Activated B cell treated with CpG ODN at 0.5 μM for 24 hours (primary cell): ENCODE measurements at regions of chr12 and their contacts with region 1.

Region 1: GRCh38 chr12:76031537-76032073 is at the start of gene PHLDA1:
- DNase-seq: peak; percentile 84
- ATAC-seq: peak; percentile 85
- H3K4me3 Mint-ChIP-seq: peak within 1 kb of the TSS; percentile 89
- H3K27ac Mint-ChIP-seq: peak within 1 kb of the TSS; percentile 84
- H3K4me1 Mint-ChIP-seq: peaks cover 22% of the 10 kb centered on the region
- H3K27me3 Mint-ChIP-seq: peaks cover 17% of the 10 kb centered on the region
- CTCF ChIP-seq: no peak
- total RNA-seq, gene PHLDA1: 0.83 and 1.1 TPM in 2 replicates

Region 2: DNA sequence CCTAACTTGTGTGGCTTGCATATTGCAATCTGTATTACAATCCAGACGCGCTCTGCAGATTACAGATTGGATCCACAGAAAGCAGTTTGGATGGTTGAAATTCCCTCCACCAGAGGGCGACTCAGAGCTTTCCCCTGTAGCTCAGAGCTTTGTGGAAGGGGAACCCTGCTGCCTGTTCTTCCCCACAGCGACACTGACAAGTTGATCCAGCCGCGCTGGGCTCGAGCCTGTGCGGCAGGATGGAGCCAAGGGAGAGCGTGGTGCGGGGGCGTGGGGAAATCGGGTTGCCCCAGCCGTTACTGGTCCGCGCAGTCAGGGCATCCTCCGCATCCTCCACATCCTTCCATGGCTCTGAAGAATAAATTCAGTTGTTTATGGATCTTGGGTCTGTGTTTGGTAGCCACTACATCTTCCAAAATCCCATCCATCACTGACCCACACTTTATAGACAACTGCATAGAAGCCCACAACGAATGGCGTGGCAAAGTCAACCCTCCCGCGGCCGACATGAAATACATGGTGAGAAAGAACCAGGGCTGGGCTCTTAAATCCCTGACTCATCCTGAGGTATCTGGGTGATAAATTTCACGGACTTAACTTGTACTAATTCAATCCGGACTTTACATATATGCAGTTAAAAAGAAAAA is 697.1 kb before region 1 on chr12 and contains the start of gene GLIPR1L1:
- CTCF ChIA-PET with region 1: interaction called, 7 read pairs
- POLR2A ChIA-PET with region 1: interaction called, 4 read pairs
- intact Hi-C with region 1: loop called (anchors 1 kb)
- DNase-seq: peak; percentile 46
- ATAC-seq: peak; percentile 75
- H3K4me3 Mint-ChIP-seq: peak within 1 kb of the TSS; percentile 60
- H3K27ac Mint-ChIP-seq: no peak within 1 kb of the TSS
- H3K4me1 Mint-ChIP-seq: peaks cover 16% of the 10 kb centered on the region
- H3K27me3 Mint-ChIP-seq: peaks cover 23% of the 10 kb centered on the region
- CTCF ChIP-seq: peak; percentile 87
- total RNA-seq, gene GLIPR1L1: not detected in 2 replicates

Region 3: DNA sequence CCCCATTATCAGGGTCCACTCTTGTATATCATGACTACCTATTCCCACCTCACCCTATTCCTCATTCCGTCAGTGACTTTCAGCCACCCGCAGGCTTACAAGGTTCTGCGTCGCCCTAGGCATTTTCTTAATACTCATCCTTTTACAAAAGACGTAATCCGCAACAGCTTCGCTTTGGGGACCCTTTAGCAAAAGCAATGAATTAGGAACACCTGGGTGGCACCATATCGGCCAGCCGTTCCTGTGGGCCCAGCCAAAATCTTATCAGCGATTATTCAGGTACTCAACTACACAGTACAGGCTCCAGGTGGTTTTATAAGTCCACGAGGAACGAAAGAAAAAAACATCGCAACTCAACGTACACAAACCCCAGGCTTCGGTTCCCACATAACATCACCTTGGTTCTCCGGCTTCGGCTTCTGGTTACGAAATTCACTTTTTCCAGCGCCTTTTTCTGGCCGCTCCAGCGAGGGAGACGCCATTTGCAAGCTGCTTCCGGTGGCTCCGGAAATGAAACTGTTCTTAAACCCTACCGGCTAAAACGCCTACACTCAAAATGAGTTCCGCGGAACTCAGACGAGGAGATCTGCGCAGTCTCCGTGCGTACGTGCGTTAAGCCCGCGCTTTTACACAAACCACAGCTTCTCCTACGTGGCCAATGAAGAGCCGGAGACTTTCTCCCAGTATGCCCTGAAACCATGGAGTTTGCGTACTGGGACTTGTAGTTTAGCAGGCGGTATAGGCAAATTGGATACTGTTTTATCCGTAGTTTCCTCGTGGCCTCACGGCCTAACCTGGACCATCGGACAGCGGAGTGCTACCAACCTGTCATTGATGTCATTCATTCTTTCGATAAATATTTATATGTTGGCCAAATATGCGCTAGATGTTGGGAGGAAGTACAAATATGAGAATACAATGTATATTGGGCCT is 520.2 kb before region 1 on chr12 and contains the start of gene KRR1:
- CTCF ChIA-PET with region 1: interaction called, 10 read pairs
- POLR2A ChIA-PET with region 1: interaction called, 23 read pairs
- intact Hi-C with region 1: loop called (anchors 1 kb)
- DNase-seq: peak; percentile 72
- ATAC-seq: peak; percentile 96
- H3K4me3 Mint-ChIP-seq: peak within 1 kb of the TSS; percentile 99
- H3K27ac Mint-ChIP-seq: peak within 1 kb of the TSS; percentile 99
- H3K4me1 Mint-ChIP-seq: peaks cover 27% of the 10 kb centered on the region
- H3K27me3 Mint-ChIP-seq: no peaks in the 10 kb centered on the region
- CTCF ChIP-seq: no peak
- total RNA-seq, gene KRR1: 75.0 and 85.1 TPM in 2 replicates

Region 4: DNA sequence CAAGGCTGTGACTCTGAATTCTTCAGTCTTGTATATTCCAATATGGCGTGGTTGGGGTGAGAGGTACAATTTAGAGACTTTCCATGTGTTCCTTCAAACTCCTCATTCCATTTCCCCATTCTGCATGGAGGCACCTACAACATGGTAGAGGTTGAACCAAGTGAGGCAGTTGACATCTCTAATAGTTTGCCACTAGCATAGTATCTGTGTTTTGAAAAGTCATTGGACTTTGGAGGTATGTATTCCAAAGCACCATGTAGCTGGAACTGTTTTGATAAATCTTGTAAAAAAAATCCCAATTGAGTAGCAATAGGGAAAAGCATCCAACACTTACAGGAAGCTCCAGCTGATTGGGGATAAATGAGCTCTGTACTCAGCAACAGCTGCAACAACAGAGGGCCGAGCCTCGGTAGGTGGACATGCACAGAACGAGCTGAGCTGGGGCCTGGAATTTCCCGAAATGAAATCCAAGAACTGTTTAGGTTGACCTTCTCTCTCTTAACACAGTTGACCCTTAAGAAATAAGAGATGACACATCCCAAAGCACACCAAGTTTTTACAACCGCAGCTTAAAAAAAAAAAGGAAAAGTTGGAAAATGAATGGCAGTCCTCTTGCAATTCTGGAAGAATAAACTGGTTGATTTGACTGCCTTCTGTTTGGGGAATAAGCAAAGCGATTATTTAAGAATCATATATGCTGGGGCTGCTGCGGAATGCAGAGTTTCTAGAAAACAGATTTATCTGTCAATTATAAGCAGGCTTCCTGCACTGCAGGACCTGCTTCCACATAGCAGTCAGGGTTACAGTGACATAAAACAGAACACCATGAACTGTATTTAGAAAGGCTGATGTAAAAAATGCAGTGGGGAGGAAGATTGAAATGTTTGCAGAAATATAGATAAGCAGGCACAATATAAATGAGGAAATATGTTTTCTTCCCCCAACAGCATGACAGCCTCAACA is 325.6 kb before region 1 on chr12:
- CTCF ChIA-PET with region 1: no interaction called
- POLR2A ChIA-PET with region 1: no interaction called
- intact Hi-C with region 1: loop called (anchors 10 kb)
- DNase-seq: no peak
- ATAC-seq: no peak
- H3K4me3 Mint-ChIP-seq: no peak overlapping the region
- H3K27ac Mint-ChIP-seq: no peak overlapping the region
- H3K4me1 Mint-ChIP-seq: peaks cover 5% of the 10 kb centered on the region
- H3K27me3 Mint-ChIP-seq: no peaks in the 10 kb centered on the region
- CTCF ChIP-seq: no peak

Region 5: DNA sequence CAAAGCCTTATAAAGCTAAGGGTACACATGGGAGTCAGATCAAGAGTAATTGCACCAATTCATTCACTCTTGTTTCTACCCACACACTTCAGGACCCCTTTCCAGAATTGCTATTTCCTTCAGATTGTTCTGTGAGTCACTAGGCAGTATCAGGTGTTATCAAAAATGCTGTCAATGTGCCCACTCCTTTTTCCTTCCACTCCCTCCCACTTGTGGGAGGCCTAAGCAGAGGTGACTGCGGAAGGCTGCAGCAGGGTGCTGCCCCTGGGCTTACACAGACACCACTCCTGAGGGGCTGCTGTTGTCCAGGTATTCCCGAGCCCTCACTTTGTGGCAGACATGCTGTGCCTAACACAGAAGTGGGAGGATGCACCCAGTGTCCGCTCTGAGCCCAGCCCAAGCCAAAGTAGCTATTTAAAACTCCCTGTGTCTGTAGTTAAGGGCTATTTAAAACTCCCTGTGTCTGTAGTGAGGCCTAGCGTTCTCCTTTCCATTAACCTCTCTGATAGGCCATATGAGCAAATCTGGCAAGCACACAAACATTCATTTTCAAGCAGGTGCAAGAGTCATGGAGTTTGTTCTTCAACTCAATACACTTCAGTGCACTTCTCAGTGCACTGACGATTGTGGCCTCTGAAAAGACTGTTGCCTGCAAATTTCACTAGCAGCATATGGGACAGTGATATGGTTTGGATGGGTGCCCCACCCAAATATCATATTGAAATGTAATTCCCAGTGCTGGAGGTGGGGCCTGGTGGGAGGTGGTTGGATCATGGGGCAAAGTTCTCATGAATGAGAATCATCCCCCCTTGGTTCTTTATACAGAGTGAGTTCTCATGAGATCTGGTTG is 117.9 kb before region 1 on chr12:
- CTCF ChIA-PET with region 1: no interaction called
- POLR2A ChIA-PET with region 1: interaction called, 9 read pairs
- intact Hi-C with region 1: loop called (anchors 1 kb)
- DNase-seq: no peak
- ATAC-seq: no peak
- H3K4me3 Mint-ChIP-seq: no peak overlapping the region
- H3K27ac Mint-ChIP-seq: no peak overlapping the region
- H3K4me1 Mint-ChIP-seq: peaks cover 19% of the 10 kb centered on the region
- H3K27me3 Mint-ChIP-seq: peaks cover 7% of the 10 kb centered on the region
- CTCF ChIP-seq: no peak

Region 6: GRCh38 chr12:76020731-76021672 is 10.6 kb before region 1 on chr12:
- CTCF ChIA-PET with region 1: interaction called, 3 read pairs
- POLR2A ChIA-PET with region 1: interaction called, 10 read pairs
- intact Hi-C with region 1: loop called (anchors 1 kb)
- DNase-seq: no peak
- ATAC-seq: peak; percentile 62
- H3K4me3 Mint-ChIP-seq: no peak overlapping the region
- H3K27ac Mint-ChIP-seq: no peak overlapping the region
- H3K4me1 Mint-ChIP-seq: peaks cover 19% of the 10 kb centered on the region
- H3K27me3 Mint-ChIP-seq: peaks cover 24% of the 10 kb centered on the region
- CTCF ChIP-seq: no peak

Region 7: GRCh38 chr12:76559400-76560085 is 527.9 kb after region 1 on chr12 and contains the start of gene OSBPL8:
- CTCF ChIA-PET with region 1: no interaction called
- POLR2A ChIA-PET with region 1: interaction called, 4 read pairs
- intact Hi-C with region 1: loop called (anchors 2 kb)
- DNase-seq: peak; percentile 96
- ATAC-seq: peak; percentile 79
- H3K4me3 Mint-ChIP-seq: peak within 1 kb of the TSS; percentile 94
- H3K27ac Mint-ChIP-seq: peak within 1 kb of the TSS; percentile 95
- H3K4me1 Mint-ChIP-seq: peaks cover 45% of the 10 kb centered on the region
- H3K27me3 Mint-ChIP-seq: no peaks in the 10 kb centered on the region
- CTCF ChIP-seq: no peak
- total RNA-seq, gene OSBPL8: 73.8 and 79.6 TPM in 2 replicates